RWPE1 (cell line): ENCODE measurements at regions of chr20 and their contacts with region 1.

Region 1: GRCh38 chr20:36199345-36200257 is 36.7 kb upstream of the AAR2 start:
- DNase-seq: peak; percentile 92
- H3K27ac ChIP-seq: no peak overlapping the region
- CTCF ChIP-seq: peak; percentile 99

Region 2: GRCh38 chr20:35994994-35995453 is 204.6 kb before region 1 on chr20:
- CTCF ChIA-PET with region 1: interaction called, 45 read pairs
- POLR2A ChIA-PET with region 1: no interaction called
- DNase-seq: peak; percentile 88
- H3K27ac ChIP-seq: no peak overlapping the region
- CTCF ChIP-seq: peak; percentile 98

Region 3: GRCh38 chr20:36154700-36155628 is 44.6 kb before region 1 on chr20 and contains the start of gene EPB41L1:
- CTCF ChIA-PET with region 1: interaction called, 67 read pairs
- POLR2A ChIA-PET with region 1: no interaction called
- DNase-seq: no peak
- H3K27ac ChIP-seq: peak within 1 kb of the TSS; percentile 44
- CTCF ChIP-seq: no peak

Region 4: DNA sequence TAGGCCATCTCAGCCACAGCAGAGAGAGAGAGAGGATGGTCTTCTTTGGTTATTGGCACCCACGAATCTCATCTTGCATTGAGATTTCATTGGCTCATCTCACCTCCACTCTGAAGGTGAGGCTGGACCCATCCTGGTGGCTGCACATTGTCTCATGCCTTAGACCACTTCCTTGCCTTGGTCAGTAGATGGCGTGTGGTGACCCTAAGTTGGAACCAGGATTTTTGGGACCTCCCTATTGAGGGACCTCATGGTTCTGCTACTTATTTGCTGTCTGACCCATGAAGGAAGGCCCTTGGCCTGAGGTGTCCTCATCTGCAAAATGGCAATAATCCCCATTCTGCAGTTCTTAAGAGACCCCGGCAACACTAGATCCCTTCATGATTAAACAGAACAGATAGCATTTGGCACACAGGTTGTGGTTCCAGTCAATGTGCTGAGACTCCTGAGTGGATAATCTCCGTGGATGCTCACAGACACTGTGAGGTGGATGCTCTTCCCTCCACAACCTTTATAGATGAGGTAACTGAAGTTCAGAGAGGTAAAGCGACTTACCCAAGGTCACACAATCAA is 15.2 kb after region 1 on chr20:
- CTCF ChIA-PET with region 1: interaction called, 50 read pairs
- POLR2A ChIA-PET with region 1: no interaction called
- DNase-seq: peak; percentile 73
- H3K27ac ChIP-seq: no peak overlapping the region
- CTCF ChIP-seq: peak; percentile 81

Region 5: GRCh38 chr20:36439040-36439730 is 239.6 kb after region 1 on chr20:
- CTCF ChIA-PET with region 1: interaction called, 46 read pairs
- POLR2A ChIA-PET with region 1: no interaction called
- DNase-seq: peak; percentile 88
- H3K27ac ChIP-seq: no peak overlapping the region
- CTCF ChIP-seq: peak; percentile 99